Activated T-helper 1 cell treated with anti-CD3 and anti-CD28 coated beads, Interleukin-12 subunit alpha, Interleukin-12 subunit beta, Interleukin-2, Interleukin-4 antibody, amounts not matched to agents 30 ng/mL and 10 ng/mL and 1 ng/mL, durations not matched to agents 14 hours and 24 hours and 36 hours (primary cell): ENCODE measurements at regions of chr12 and their contacts with region 1.

Region 1: DNA sequence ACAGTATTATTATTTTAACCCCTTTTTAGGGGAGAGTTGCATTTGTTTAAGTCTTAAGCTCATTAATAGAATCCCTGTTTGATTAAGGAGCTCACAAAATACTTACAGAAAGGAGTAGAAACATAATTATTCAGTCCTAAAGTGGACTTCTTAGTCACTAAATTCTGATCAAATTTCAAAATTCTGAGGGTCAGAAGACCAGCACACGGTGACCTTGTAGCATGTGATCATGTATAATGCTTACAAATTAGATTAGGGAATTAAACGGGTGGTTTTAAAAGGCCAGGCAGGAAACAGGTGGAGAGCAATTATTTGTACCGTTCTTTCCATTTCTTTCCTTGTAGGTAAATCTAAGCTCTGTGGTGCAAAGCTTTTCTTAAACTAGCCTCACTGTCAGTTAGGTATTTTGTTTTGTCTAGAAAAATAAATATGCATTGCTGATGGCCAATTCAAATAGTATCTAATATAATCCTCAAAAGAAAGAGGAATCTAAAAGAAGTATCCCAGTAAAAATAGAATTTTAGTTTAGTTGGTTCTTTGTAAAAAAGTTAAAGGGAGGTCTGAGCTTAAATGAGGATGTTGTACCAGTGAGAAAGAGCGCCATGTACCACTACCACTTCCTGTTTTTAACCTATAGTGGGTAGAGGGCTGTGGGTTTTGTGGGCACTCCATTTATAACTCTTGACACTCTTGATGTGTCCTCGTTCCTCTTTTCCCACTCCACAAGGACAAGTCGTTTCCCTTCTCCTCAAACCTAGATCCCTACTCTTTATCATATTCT is 51.1 kb downstream of the SLC38A1 start:
- DNase-seq: peak; percentile 64
- H3K4me3 Mint-ChIP-seq: peak overlapping the region; percentile 68
- H3K27ac Mint-ChIP-seq: peak overlapping the region; percentile 92
- H3K4me1 Mint-ChIP-seq: peaks cover 97% of the 10 kb centered on the region
- H3K27me3 Mint-ChIP-seq: no peaks in the 10 kb centered on the region

Region 2: GRCh38 chr12:46024099-46024498 is 193.6 kb before region 1 on chr12:
- intact Hi-C with region 1: no loop called
- DNase-seq: no peak
- H3K4me3 Mint-ChIP-seq: no peak overlapping the region
- H3K27ac Mint-ChIP-seq: no peak overlapping the region
- H3K4me1 Mint-ChIP-seq: no peaks in the 10 kb centered on the region
- H3K27me3 Mint-ChIP-seq: peaks cover 2% of the 10 kb centered on the region

Region 3: DNA sequence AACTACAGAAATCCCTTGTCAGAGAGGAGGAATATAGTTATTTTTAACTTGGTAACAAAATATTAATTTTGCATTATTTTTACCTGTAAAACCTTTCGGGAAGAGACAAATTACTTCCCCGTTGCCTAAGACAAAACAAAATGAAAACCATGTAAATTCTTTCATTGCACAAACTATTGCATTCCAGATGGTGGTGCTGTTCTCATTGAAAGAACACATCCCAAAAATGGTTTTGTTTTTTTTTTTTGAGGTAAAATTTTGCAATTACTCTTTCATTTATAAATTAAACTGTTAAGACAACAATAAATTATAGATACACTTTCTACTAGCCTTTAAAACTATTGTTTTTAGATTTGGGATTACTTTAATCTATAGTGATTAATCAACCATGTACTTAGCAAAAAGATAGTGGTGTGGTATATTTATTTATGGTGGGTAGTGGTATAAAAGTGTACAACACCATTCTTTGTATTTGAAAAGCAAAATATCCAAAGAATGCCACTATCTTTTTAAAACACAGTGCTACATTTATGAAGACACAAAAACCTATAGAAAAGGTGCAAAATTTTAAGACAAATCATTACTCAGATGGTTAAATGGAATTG is 64.4 kb before region 1 on chr12:
- intact Hi-C with region 1: no loop called
- DNase-seq: no peak
- H3K4me3 Mint-ChIP-seq: no peak overlapping the region
- H3K27ac Mint-ChIP-seq: no peak overlapping the region
- H3K4me1 Mint-ChIP-seq: no peaks in the 10 kb centered on the region
- H3K27me3 Mint-ChIP-seq: peaks cover 6% of the 10 kb centered on the region

Region 4: GRCh38 chr12:46230983-46231382 is 13.3 kb after region 1 on chr12:
- intact Hi-C with region 1: loop called (anchors 1 kb)
- DNase-seq: no peak
- H3K4me3 Mint-ChIP-seq: no peak overlapping the region
- H3K27ac Mint-ChIP-seq: peak overlapping the region; percentile 31
- H3K4me1 Mint-ChIP-seq: peaks cover 55% of the 10 kb centered on the region
- H3K27me3 Mint-ChIP-seq: no peaks in the 10 kb centered on the region

Region 5: DNA sequence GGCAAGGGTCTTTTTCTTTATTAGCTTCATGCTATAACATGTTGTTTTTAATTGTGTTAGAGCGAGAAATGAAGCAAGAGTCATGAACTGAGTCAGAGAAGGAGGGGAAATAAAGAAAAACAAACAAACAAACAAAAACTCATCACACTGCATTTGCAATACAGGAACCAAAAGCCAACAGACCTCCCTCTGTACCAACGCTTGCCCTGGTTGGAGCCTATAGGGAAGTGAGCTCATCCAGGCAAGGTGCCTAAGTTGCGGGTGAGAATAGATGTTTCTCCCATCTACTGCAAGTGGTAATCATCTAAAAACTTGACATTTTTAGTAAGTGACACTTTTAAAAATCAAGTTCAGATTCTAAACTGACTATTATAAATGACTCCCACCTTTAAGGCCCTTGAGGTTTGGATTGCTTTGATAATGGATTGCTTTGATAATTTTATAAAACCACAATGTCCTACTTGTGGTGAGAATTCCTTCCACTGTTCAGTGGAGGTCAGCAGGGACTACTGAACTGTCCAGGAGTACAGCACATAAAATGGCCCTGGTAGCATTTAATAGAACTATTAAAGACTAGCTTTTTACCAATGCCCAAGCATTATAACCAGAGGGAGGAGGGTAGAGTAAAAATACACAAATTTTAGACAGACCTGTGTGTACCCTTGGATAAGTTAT is 19.8 kb after region 1 on chr12:
- intact Hi-C with region 1: loop called (anchors 2 kb)
- DNase-seq: no peak
- H3K4me3 Mint-ChIP-seq: no peak overlapping the region
- H3K27ac Mint-ChIP-seq: no peak overlapping the region
- H3K4me1 Mint-ChIP-seq: peaks cover 52% of the 10 kb centered on the region
- H3K27me3 Mint-ChIP-seq: no peaks in the 10 kb centered on the region

Region 6: GRCh38 chr12:46516933-46517578 is 299.3 kb after region 1 on chr12:
- intact Hi-C with region 1: loop called (anchors 2 kb)
- DNase-seq: no peak
- H3K4me3 Mint-ChIP-seq: peak overlapping the region; percentile 74
- H3K27ac Mint-ChIP-seq: peak overlapping the region; percentile 98
- H3K4me1 Mint-ChIP-seq: peaks cover 60% of the 10 kb centered on the region
- H3K27me3 Mint-ChIP-seq: no peaks in the 10 kb centered on the region

Region 7: DNA sequence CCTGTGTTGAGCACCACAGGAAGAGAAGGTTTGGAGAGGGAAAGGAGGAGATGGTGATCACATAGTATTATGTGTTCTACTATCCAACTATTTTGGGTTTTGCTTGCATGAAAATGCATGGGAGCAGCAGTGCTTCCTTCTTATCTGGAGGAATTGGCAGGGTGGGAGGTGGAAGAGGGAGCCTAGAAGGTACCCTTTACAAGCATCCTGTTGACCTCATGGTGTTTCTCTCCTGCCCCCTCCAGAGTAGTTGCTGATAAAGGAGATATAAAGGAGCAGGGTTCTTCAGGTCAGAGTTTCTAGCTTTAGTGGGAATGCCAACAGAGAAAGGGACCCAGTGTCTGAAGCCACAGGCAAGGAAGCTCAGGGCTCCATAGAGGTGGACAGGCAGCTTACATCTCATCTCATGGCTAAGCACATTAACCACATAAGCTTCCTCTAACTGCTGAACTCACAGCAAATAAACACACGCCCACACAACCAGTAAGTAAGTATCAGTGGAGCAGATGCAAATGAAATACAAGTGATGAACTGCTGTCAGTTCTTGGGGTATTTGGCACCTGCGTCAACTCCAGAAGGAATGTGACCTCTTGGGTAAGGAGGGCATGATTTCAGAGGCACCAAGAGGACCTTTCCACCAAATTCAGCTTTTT is 329.0 kb after region 1 on chr12:
- intact Hi-C with region 1: loop called (anchors 2 kb)
- DNase-seq: peak; percentile 19
- H3K4me3 Mint-ChIP-seq: peak overlapping the region; percentile 34
- H3K27ac Mint-ChIP-seq: peak overlapping the region; percentile 89
- H3K4me1 Mint-ChIP-seq: peaks cover 58% of the 10 kb centered on the region
- H3K27me3 Mint-ChIP-seq: no peaks in the 10 kb centered on the region

Region 8: DNA sequence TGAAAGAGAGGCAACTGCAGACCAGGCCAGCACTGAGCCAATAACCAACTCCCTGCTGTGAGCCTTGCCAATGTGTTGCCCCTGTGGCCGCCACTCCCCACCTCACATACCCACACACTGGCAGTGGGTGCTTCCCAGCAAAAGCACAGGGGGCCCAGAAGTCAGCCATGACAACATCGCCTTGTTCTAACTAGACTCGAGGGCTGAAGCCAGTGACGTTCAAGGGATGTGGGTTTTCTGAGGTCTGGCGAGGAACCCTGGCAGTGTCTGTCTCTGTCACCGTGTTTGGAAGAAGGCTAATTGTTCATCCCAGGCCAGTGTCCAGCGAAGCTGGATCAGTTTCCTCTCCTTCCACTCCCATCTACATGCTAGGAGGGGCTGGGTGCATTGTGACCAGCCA is 1173.8 kb after region 1 on chr12:
- intact Hi-C with region 1: loop called (anchors 2 kb)
- DNase-seq: peak; percentile 44
- H3K4me3 Mint-ChIP-seq: peak overlapping the region; percentile 27
- H3K27ac Mint-ChIP-seq: peak overlapping the region; percentile 100
- H3K4me1 Mint-ChIP-seq: peaks cover 89% of the 10 kb centered on the region
- H3K27me3 Mint-ChIP-seq: no peaks in the 10 kb centered on the region